Activated CD8-positive, alpha-beta T cell treated with anti-CD3 and anti-CD28 coated beads for 36 hours (primary cell): ENCODE measurements at regions of chr6 and their contacts with region 1.

Region 1: DNA sequence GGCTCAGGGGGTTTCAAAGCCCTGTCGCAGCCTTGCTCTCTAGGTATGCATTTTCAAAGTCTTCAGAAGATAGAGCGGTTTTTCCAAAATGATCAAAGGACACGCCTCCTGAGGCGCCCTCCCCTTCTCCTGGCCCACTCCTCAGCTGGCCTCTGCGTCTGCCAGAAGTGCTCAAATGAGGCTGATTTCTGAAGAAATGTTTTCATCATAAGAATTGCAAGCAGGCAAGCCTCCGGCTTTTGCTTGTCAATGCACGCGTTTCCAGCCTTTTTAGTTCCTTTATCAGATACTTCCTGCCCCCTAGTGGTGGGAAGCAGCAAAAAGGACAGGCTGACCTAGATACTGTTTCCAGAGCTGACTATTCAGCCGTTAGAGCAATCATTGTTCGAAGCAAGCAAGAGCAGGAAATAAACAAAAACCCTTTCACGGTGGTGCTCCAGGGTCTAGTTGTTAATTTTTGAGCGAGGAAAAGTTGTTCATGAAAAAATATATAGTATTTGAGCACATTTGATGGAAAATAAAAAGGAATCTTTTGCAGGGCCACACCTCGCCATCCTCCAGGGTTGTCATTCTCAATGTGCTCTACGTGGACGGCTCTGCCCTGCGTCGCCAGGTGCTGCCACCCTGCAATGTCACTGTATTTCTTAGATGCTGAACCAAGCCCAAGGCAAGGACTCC is 93.4 kb upstream of the ASF1A start:
- DNase-seq: peak; percentile 95
- ATAC-seq: peak; percentile 97
- H3K4me3 Mint-ChIP-seq: peak overlapping the region; percentile 63
- H3K27ac Mint-ChIP-seq: peak overlapping the region; percentile 76
- H3K4me1 Mint-ChIP-seq: peaks cover 34% of the 10 kb centered on the region
- H3K27me3 Mint-ChIP-seq: no peaks in the 10 kb centered on the region
- CTCF ChIP-seq: peak; percentile 85

Region 2: DNA sequence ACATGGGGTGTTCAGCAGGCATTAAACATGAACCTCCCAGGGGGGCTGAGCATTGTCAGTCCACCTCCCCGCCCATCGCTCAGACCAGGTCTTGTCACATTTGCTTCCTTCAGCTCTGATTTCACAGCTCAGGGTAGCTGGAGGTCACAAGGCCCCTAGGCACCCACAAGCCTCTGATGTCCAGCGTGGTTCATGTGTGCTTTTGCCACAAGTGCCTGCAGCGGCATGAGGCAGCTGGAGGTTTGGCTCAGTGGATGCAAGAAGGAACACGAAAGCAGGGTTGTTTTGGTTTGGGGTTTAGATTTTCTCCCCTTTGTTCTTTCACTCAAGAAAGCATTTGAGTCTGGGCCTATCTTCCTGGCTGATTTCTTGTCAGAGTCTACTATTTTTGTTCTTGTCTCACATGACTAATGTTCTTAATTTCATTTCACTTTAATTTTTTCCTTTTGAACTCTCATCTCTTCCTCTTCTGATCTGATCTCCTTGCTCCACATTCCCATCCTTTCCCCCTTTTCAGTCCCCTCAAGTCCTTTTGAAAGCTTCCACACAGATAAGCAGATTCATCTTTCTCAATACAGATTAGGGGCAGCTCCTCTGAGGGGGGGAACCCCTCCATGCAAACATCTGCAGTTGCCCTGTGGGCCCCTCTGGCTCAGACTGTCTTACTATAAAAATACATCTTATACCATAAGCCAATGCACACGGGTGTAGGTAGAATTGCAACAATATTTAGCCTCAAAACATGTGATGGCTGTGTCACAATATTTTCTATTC is 81.0 kb before region 1 on chr6:
- CTCF ChIA-PET with region 1: no interaction called
- POLR2A ChIA-PET with region 1: no interaction called
- intact Hi-C with region 1: no loop called
- DNase-seq: peak; percentile 75
- ATAC-seq: peak; percentile 71
- H3K4me3 Mint-ChIP-seq: peak overlapping the region; percentile 41
- H3K27ac Mint-ChIP-seq: peak overlapping the region; percentile 96
- H3K4me1 Mint-ChIP-seq: peaks cover 73% of the 10 kb centered on the region
- H3K27me3 Mint-ChIP-seq: no peaks in the 10 kb centered on the region
- CTCF ChIP-seq: no peak

Region 3: GRCh38 chr6:118787724-118788423 is 12.7 kb before region 1 on chr6:
- CTCF ChIA-PET with region 1: interaction called, 18 read pairs
- POLR2A ChIA-PET with region 1: interaction called, 3 read pairs
- intact Hi-C with region 1: no loop called
- DNase-seq: no peak
- ATAC-seq: peak; percentile 51
- H3K4me3 Mint-ChIP-seq: no peak overlapping the region
- H3K27ac Mint-ChIP-seq: peak overlapping the region; percentile 42
- H3K4me1 Mint-ChIP-seq: peaks cover 37% of the 10 kb centered on the region
- H3K27me3 Mint-ChIP-seq: no peaks in the 10 kb centered on the region
- CTCF ChIP-seq: no peak

Region 4: GRCh38 chr6:118825661-118826060 is 25.1 kb after region 1 on chr6:
- CTCF ChIA-PET with region 1: interaction called, 14 read pairs
- POLR2A ChIA-PET with region 1: no interaction called
- intact Hi-C with region 1: no loop called
- DNase-seq: no peak
- ATAC-seq: no peak
- H3K4me3 Mint-ChIP-seq: no peak overlapping the region
- H3K27ac Mint-ChIP-seq: no peak overlapping the region
- H3K4me1 Mint-ChIP-seq: peaks cover 3% of the 10 kb centered on the region
- H3K27me3 Mint-ChIP-seq: no peaks in the 10 kb centered on the region
- CTCF ChIP-seq: no peak

Region 5: GRCh38 chr6:119241111-119241465 is 440.6 kb after region 1 on chr6:
- CTCF ChIA-PET with region 1: no interaction called
- POLR2A ChIA-PET with region 1: no interaction called
- intact Hi-C with region 1: no loop called
- DNase-seq: no peak
- ATAC-seq: no peak
- H3K4me3 Mint-ChIP-seq: no peak overlapping the region
- H3K27ac Mint-ChIP-seq: no peak overlapping the region
- H3K4me1 Mint-ChIP-seq: no peaks in the 10 kb centered on the region
- H3K27me3 Mint-ChIP-seq: no peaks in the 10 kb centered on the region
- CTCF ChIP-seq: no peak